PC-3 (cell line): ENCODE measurements at regions of chr10 and their contacts with region 1.

Region 1: DNA sequence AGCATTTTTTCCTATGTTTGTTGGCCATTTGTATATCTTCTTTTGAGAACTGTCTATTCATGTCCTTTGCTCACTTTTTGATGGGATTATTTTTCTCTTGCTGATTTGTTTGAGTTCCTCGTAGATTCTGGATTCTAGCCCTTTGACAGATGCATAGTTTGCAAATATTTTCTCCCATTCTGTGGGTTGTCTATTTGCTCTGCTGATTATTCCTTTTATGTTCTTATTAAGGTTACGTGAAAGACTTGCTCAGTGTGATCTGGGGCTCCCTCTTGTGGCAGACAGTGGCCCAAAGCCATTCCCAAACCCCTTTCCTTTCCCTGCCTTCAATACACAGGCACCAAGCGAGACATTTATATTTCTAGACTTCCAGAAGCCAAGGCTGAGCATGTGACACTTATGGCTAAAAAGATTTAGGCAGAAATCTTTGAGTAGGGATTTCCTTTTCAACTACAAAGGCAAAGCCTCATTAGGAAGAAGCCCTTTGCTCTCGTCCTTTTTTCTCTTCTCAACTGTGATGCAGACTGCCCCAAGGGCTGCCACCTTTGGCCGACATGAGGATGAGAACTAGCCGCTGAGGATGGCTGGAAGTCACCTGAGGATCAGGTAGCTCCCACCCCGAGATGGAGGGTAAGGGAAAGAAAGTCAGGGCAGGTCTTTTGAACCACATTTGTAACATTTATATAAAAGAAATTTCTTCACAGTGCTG is 23.6 kb downstream of the ST8SIA6 start:
- DNase-seq: peak; percentile 72
- ATAC-seq: peak; percentile 89
- H3K4me3 ChIP-seq: no peak overlapping the region
- H3K27ac ChIP-seq: no peak overlapping the region
- H3K4me1 ChIP-seq: no peaks in the 10 kb centered on the region
- H3K27me3 ChIP-seq: no peaks in the 10 kb centered on the region
- CTCF ChIP-seq: peak; percentile 72

Region 2: GRCh38 chr10:17290226-17290625 is 140.6 kb before region 1 on chr10:
- CTCF ChIA-PET with region 1: interaction called, 5 read pairs
- POLR2A ChIA-PET with region 1: no interaction called
- intact Hi-C with region 1: loop called (anchors 1 kb)
- DNase-seq: peak; percentile 63
- ATAC-seq: peak; percentile 74
- H3K4me3 ChIP-seq: no peak overlapping the region
- H3K27ac ChIP-seq: no peak overlapping the region
- H3K4me1 ChIP-seq: no peaks in the 10 kb centered on the region
- H3K27me3 ChIP-seq: no peaks in the 10 kb centered on the region
- CTCF ChIP-seq: peak; percentile 71

Region 3: GRCh38 chr10:17353559-17354300 is 77.1 kb before region 1 on chr10:
- CTCF ChIA-PET with region 1: no interaction called
- POLR2A ChIA-PET with region 1: no interaction called
- intact Hi-C with region 1: loop called (anchors 10 kb)
- DNase-seq: peak; percentile 81
- ATAC-seq: peak; percentile 26
- H3K4me3 ChIP-seq: 0 out of 2 replicates have a peak overlapping the region, but pooled peaks have one; percentile 27
- H3K27ac ChIP-seq: peak overlapping the region; percentile 55
- H3K4me1 ChIP-seq: peaks cover 61% of the 10 kb centered on the region
- H3K27me3 ChIP-seq: no peaks in the 10 kb centered on the region
- CTCF ChIP-seq: no peak

Region 4: DNA sequence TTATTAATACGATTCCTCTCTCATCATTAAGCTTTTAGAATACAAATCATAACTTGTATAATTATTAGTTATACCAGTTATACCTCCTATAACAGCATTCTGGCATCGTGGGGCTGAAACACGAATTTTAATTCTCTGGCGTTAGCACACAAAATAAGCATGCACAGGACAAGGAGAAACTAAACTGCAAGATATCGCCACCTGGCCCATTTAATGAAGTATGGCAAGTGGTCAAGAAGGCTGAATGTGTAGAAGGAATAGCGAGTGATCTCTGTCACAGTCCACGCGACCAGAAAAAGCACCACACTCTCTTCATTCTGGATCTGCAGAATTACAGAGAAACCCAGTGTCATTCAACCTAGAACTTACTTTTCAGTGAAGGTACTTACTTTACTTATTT is 168.3 kb after region 1 on chr10:
- CTCF ChIA-PET with region 1: interaction called, 3 read pairs
- POLR2A ChIA-PET with region 1: no interaction called
- intact Hi-C with region 1: loop called (anchors 10 kb)
- DNase-seq: peak; percentile 25
- ATAC-seq: 0 out of 2 replicates have a peak, but pooled peaks have one; percentile 22
- H3K4me3 ChIP-seq: no peak overlapping the region
- H3K27ac ChIP-seq: no peak overlapping the region
- H3K4me1 ChIP-seq: no peaks in the 10 kb centered on the region
- H3K27me3 ChIP-seq: no peaks in the 10 kb centered on the region
- CTCF ChIP-seq: peak; percentile 34; the same call in 1 of the 2 replicates